ENCODE measurements at regions of chr11 and their contacts with region 1.

Region 1: DNA sequence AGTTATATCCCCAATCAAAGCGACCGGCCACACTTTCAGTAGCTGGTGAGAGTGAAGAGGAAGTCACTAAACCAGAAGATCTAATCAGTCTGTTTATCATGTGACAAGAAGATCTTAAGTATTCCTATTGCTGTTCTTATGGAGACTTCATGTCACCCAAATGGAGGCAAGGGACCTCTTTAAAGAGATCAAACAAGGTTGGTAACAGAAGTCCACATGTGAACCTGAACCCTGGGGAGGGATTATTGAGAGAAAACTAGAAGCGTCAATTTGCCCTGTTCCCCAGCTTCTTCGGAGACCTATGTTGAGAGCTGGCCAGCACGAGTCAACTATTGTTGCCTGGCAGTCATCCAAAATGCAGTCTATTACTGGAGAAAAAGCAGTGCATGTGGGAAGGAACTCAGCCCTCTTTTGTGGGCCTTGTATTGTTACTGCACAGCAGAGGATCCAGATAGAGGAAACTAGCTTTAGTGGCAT is 76.9 kb upstream of the CTSC start:
- DNase-seq: peak in 4 of 9 experiments; percentile 16 to 60 (median 33)
- ATAC-seq: peak; percentile 53
- H3K4me3 ChIP-seq: peak overlapping the region; percentile 4 to 14
- H3K4me3 Mint-ChIP-seq: peak overlapping the region; percentile 58
- H3K27ac ChIP-seq: peak overlapping the region in 1 of 2 experiments; percentile 39
- H3K27ac Mint-ChIP-seq: no peak overlapping the region
- H3K4me1 ChIP-seq: peaks cover 29% of the 10 kb centered on the region
- H3K4me1 Mint-ChIP-seq: peaks cover 27% of the 10 kb centered on the region
- H3K27me3 ChIP-seq: no peaks in the 10 kb centered on the region
- H3K27me3 Mint-ChIP-seq: no peaks in the 10 kb centered on the region
- CTCF ChIP-seq: no peak

Region 2: DNA sequence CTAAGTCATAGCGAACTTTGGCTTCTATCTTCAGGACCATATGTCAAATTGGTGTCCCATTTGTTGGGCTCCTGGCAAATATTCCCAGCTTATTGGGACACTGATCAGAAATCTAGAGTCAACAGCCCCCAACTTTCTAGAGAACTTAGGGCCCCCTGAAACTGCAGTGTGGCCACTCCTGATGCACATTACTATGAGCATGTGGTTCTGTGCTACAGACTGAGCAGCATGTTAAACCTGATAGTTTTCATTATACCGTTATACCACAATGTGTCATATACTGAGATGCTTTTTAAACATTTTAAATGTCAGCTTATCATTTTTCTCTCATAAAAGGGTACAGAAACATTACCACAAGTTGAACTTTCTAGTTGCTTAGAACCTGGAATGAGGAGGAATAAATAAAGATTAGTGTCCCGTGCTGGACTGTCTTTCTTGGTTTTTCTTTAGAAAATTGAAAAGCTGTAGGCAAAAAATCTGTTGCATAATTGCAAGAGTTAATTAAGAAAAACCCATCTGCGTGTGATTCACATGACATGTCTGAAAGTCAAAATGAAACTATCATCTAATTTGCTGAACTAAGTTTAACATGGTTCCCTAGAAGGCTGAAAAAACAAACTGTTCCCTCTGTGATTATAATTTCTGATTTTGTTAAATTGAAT is 60.5 kb before region 1 on chr11:
- CTCF ChIA-PET with region 1: no interaction called
- POLR2A ChIA-PET with region 1: no interaction called
- intact Hi-C with region 1: loop called in 1 of 2 experiments (anchors 5 kb)
- DNase-seq: peak in 2 of 9 experiments; percentile 30 to 44
- ATAC-seq: peak; percentile 36
- H3K4me3 ChIP-seq: peak overlapping the region in 1 of 2 experiments; percentile 1
- H3K4me3 Mint-ChIP-seq: peak overlapping the region; percentile 63
- H3K27ac ChIP-seq: peak overlapping the region in 1 of 2 experiments; percentile 72
- H3K27ac Mint-ChIP-seq: peak overlapping the region; percentile 27
- H3K4me1 ChIP-seq: no peaks in the 10 kb centered on the region
- H3K4me1 Mint-ChIP-seq: peaks cover 26% of the 10 kb centered on the region
- H3K27me3 ChIP-seq: no peaks in the 10 kb centered on the region
- H3K27me3 Mint-ChIP-seq: no peaks in the 10 kb centered on the region
- CTCF ChIP-seq: no peak

Measured in CD8-positive, alpha-beta T cell (primary cell).